H1 (cell line): ENCODE measurements at regions of chr11 and their contacts with region 1.

Region 1: DNA sequence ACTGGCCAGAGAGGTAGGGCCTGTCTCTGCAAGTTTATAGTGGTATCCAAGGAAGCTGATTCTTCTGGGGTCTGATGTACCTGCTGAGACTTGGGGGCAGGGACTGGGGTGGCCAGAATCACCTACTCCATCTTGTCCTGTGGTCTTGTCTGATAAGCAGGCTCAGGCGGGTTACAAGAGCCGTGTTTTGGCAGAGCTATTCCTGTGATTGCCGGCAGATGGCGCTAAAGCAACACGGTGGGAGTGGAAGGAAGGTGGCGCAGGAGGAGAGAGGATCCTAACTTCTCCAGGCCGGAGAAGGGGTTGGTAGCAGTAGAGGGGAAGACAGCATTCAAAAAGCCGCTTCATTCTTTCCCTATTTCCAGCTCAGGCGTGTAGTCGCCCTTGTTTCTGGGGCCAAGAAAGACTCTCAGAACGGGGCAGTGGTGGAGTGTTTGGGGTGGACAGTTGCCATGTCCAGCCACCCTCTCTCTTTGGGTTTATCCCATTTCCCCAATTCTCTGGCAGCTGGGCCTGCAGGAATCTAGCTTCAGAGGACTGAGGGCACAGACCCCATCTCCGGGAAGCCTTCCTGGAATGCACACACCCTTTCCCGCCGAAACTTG is 15.1 kb downstream of the CHRM1 start:
- DNase-seq: peak; percentile 71 to 96
- H3K4me3 ChIP-seq: no peak overlapping the region
- H3K27ac ChIP-seq: no peak overlapping the region
- H3K4me1 ChIP-seq: peaks cover 9 to 25% (median 16%) of the 10 kb centered on the region in 4 experiments
- H3K27me3 ChIP-seq: peaks cover 0 to 3% (median 1%) of the 10 kb centered on the region in 4 experiments; a peak in 2 of 7 replicates
- CTCF ChIP-seq: peak; percentile 99 to 100 (median 99)
- EP300 ChIP-seq: no peak
- POLR2A ChIP-seq: no peak
- RAD21 ChIP-seq: peak; percentile 100

Region 2: GRCh38 chr11:62601394-62602140 is 304.5 kb before region 1 on chr11 and contains the start of gene MTA2:
- CTCF ChIA-PET with region 1: no interaction called
- POLR2A ChIA-PET with region 1: no interaction called
- DNase-seq: peak; percentile 98 to 100
- H3K4me3 ChIP-seq: peak within 1 kb of the TSS; percentile 74 to 86 (median 84)
- H3K27ac ChIP-seq: peak within 1 kb of the TSS; percentile 79
- H3K4me1 ChIP-seq: peaks cover 7 to 32% (median 17%) of the 10 kb centered on the region in 4 experiments
- H3K27me3 ChIP-seq: peaks cover 0 to 13% (median 11%) of the 10 kb centered on the region in 4 experiments; a peak in 6 of 7 replicates
- CTCF ChIP-seq: no peak
- EP300 ChIP-seq: no peak
- POLR2A ChIP-seq: peak in 1 of 2 experiments; percentile 78; a peak in 2 of 3 replicates
- RAD21 ChIP-seq: no peak
- total RNA-seq, gene MTA2: 114 and 117 TPM in 2 replicates

Region 3: GRCh38 chr11:62713343-62713742 is 192.7 kb before region 1 on chr11:
- CTCF ChIA-PET with region 1: no interaction called
- POLR2A ChIA-PET with region 1: no interaction called
- DNase-seq: no peak
- H3K4me3 ChIP-seq: no peak overlapping the region
- H3K27ac ChIP-seq: peak overlapping the region; percentile 13; the same call in 1 of the 2 replicates
- H3K4me1 ChIP-seq: peaks cover 0 to 27% (median 11%) of the 10 kb centered on the region in 4 experiments; a peak in 6 of 7 replicates
- H3K27me3 ChIP-seq: no peaks in the 10 kb centered on the region; a peak in 1 of 7 replicates
- CTCF ChIP-seq: no peak
- EP300 ChIP-seq: no peak
- POLR2A ChIP-seq: no peak
- RAD21 ChIP-seq: no peak

Region 4: DNA sequence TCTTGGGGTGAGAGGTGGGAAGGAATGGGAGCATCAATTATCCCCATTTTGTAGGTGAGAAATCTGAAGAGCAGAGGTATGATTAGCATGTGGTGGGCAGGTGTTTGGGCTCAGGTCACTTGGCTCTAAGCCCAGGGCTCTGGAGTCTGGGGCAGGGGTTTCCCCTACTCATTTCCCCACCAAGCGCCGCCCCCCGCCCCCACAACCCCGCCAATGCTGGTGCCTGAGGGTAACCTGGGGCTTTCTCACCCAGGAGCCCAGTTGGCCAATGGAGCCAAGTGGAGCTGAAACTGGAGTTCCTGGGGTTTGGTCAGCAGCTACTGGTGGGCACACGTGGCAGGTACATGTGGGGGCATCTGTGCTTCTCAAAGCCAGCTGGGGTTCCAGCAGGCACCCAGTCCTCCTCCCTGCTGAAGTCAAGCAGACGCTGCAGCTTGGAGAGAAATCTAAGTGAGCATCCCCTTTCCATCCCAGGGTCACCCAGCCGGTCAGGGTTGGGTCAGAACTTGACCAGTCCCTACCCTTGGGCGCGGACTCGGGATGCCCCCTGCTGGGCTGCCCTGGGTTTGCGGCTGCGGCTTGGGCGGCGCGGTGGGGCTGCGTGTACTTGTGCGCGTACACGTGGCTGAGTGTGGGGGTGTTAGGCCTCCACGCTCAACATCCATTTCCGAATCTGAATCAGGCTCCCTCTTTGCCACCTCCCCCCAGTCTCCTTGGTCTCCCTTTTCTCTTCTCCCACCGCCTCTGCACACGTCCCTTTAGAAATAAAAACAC is 16.8 kb after region 1 on chr11:
- CTCF ChIA-PET with region 1: interaction called, 230 read pairs
- POLR2A ChIA-PET with region 1: interaction called, 136 read pairs
- DNase-seq: peak in 1 of 2 experiments; percentile 87
- H3K4me3 ChIP-seq: peak overlapping the region; percentile 3 to 64 (median 16); a peak in 4 of 8 replicates
- H3K27ac ChIP-seq: no peak overlapping the region
- H3K4me1 ChIP-seq: peaks cover 6 to 35% (median 21%) of the 10 kb centered on the region in 4 experiments
- H3K27me3 ChIP-seq: peaks cover 15 to 45% (median 41%) of the 10 kb centered on the region in 4 experiments
- CTCF ChIP-seq: peak; percentile 62 to 79 (median 69)
- EP300 ChIP-seq: no peak
- POLR2A ChIP-seq: no peak
- RAD21 ChIP-seq: peak; percentile 60 to 76

Region 5: GRCh38 chr11:62958547-62959421 is 52.8 kb after region 1 on chr11:
- CTCF ChIA-PET with region 1: interaction called, 10 read pairs
- POLR2A ChIA-PET with region 1: interaction called, 3 read pairs
- DNase-seq: no peak
- H3K4me3 ChIP-seq: no peak overlapping the region
- H3K27ac ChIP-seq: no peak overlapping the region
- H3K4me1 ChIP-seq: 0 out of 7 replicates have a peak, but pooled peaks cover 0 to 3% (median 0%) of the 10 kb centered on the region in 4 experiments
- H3K27me3 ChIP-seq: no peaks in the 10 kb centered on the region
- CTCF ChIP-seq: no peak
- EP300 ChIP-seq: no peak
- POLR2A ChIP-seq: no peak
- RAD21 ChIP-seq: no peak

Region 6: DNA sequence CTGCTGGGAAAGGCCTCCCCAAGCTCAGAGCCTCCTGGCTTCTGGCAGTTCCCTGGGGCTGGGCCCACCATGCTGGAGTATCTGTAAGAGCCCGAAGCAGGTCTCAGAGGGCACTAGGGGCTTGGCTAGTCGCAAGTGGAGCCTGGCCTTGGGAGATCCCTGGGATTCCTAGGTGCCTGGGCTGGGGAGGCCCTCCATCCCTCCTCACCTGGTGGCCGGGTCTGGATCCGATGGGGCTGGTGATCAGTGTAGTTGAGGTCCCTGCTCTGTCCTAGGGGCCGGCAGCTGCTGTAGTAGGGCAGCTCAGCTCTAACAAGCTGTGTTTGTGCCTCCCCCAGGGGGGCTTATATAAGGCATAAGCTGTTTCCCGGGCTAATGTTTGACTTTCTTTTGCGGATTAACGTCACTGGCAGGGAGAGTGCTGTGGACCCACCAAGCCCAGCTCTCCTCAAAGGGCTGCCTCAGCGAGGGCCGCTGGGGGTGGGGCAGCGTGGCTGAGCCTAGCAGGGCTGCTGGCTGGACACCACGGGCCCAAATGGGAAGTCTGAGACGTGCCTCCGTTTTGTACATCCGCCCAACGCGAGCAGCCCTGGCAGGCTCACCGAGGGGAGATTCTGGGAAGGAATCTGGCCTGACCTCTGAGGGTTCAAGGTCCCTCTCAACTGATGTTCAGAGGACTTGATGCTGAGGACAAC is 109.6 kb after region 1 on chr11 and contains the start of gene SLC22A8:
- CTCF ChIA-PET with region 1: interaction called, 435 read pairs
- POLR2A ChIA-PET with region 1: interaction called, 6 read pairs
- DNase-seq: no peak
- H3K4me3 ChIP-seq: no peak within 1 kb of the TSS
- H3K27ac ChIP-seq: no peak within 1 kb of the TSS
- H3K4me1 ChIP-seq: peaks cover 0 to 12% (median 8%) of the 10 kb centered on the region in 4 experiments; a peak in 5 of 7 replicates
- H3K27me3 ChIP-seq: no peaks in the 10 kb centered on the region
- CTCF ChIP-seq: no peak
- EP300 ChIP-seq: no peak
- POLR2A ChIP-seq: no peak
- RAD21 ChIP-seq: no peak
- total RNA-seq, gene SLC22A8: not detected in 2 replicates

Region 7: DNA sequence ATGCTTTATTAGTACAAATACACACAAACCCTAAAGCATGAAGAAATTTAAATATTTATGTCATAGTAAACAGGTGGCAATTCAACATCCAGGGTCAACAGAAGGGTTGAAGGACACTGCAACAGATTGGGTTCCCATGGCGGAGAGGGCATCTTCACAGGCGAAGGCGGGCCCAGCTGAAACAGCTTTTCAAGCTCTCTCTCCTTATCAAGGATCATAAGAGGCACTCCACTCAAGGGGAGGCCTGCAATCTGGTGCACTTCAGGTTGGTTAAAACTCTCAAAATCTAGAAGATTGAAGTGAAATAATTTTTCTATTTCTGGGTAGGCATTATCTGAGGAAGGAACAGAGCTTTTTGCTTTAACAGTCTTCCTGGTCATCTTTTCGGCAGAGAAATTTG is 126.4 kb after region 1 on chr11:
- CTCF ChIA-PET with region 1: interaction called, 43 read pairs
- POLR2A ChIA-PET with region 1: interaction called, 3 read pairs
- DNase-seq: no peak
- H3K4me3 ChIP-seq: no peak overlapping the region
- H3K27ac ChIP-seq: no peak overlapping the region
- H3K4me1 ChIP-seq: peaks cover 0 to 4% (median 1%) of the 10 kb centered on the region in 4 experiments; a peak in 2 of 7 replicates
- H3K27me3 ChIP-seq: no peaks in the 10 kb centered on the region
- CTCF ChIP-seq: no peak
- EP300 ChIP-seq: no peak
- POLR2A ChIP-seq: no peak
- RAD21 ChIP-seq: no peak